ENCODE measurements at regions of chr6 and their contacts with region 1.

Region 1: GRCh38 chr6:137873273-137873762 is 6.3 kb downstream of the TNFAIP3 start:
- DNase-seq: peak; percentile 92
- H3K4me3 Mint-ChIP-seq: peak overlapping the region; percentile 91
- H3K27ac Mint-ChIP-seq: peak overlapping the region; percentile 93
- H3K4me1 Mint-ChIP-seq: peaks cover 46% of the 10 kb centered on the region
- H3K27me3 Mint-ChIP-seq: no peaks in the 10 kb centered on the region

Region 2: DNA sequence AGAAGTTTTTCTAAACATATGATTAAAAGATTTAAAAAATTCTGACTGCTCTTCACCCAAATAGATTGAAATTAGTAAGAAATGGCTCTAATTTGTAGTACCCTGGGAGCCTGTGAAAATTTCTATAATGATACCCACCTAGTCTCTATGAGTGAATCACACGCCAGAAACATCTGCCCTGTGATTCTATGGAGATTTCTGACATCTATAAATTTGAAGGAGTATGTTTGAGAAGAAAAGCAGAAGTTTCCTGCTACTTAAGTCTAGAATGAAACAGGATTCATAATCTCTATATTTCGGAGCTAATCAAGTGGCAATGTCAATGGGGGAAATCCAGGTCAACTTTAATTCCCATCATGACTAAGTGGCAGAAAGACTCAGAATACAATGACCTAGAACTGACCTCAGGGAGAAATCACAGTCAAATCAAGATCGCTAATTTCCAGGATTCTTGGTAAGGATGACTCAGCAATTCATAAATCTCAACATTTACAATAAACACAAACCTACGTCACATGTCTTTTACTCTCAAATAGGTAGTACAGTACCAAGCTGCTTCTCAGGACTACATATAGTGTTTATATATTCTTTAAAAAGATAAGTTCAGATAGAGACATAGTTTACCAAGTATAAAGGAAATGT is 192.5 kb before region 1 on chr6:
- CTCF ChIA-PET with region 1: interaction called, 3 read pairs
- POLR2A ChIA-PET with region 1: interaction called, 11 read pairs
- intact Hi-C with region 1: no loop called
- DNase-seq: no peak
- H3K4me3 Mint-ChIP-seq: peak overlapping the region; percentile 18
- H3K27ac Mint-ChIP-seq: peak overlapping the region; percentile 75
- H3K4me1 Mint-ChIP-seq: peaks cover 64% of the 10 kb centered on the region
- H3K27me3 Mint-ChIP-seq: no peaks in the 10 kb centered on the region

Region 3: GRCh38 chr6:137799950-137800568 is 73.3 kb before region 1 on chr6:
- CTCF ChIA-PET with region 1: interaction called, 170 read pairs
- POLR2A ChIA-PET with region 1: interaction called, 40 read pairs
- intact Hi-C with region 1: no loop called
- DNase-seq: peak; percentile 72
- H3K4me3 Mint-ChIP-seq: peak overlapping the region; percentile 4
- H3K27ac Mint-ChIP-seq: peak overlapping the region; percentile 69
- H3K4me1 Mint-ChIP-seq: peaks cover 57% of the 10 kb centered on the region
- H3K27me3 Mint-ChIP-seq: no peaks in the 10 kb centered on the region

Region 4: GRCh38 chr6:137823826-137824555 is 49.3 kb before region 1 on chr6:
- CTCF ChIA-PET with region 1: interaction called, 17 read pairs
- POLR2A ChIA-PET with region 1: interaction called, 30 read pairs
- intact Hi-C with region 1: loop called (anchors 1 kb)
- DNase-seq: peak; percentile 83
- H3K4me3 Mint-ChIP-seq: peak overlapping the region; percentile 70
- H3K27ac Mint-ChIP-seq: peak overlapping the region; percentile 96
- H3K4me1 Mint-ChIP-seq: peaks cover 83% of the 10 kb centered on the region
- H3K27me3 Mint-ChIP-seq: no peaks in the 10 kb centered on the region

Region 5: DNA sequence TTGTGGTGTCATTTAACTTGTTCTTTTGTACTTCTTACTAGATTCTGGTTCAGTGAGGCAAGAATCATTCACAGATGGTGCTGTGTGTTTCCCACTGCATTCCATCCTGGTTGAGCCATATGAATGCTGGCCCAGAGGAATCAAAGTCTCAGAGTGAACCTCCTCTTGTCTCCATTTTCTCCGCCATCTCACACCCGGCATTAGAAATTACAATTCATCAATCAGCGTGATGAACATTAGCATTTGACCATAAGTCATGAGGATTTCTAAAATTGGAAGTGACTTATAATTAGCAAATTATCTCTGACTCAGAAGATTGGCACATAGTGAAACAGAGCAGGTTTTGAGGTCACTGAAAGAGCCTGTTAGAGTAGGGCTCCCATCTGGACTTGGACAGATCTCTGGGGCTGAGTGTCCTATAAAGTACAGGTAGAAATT is 19.0 kb after region 1 on chr6:
- CTCF ChIA-PET with region 1: no interaction called
- POLR2A ChIA-PET with region 1: no interaction called
- intact Hi-C with region 1: no loop called
- DNase-seq: no peak
- H3K4me3 Mint-ChIP-seq: no peak overlapping the region
- H3K27ac Mint-ChIP-seq: no peak overlapping the region
- H3K4me1 Mint-ChIP-seq: peaks cover 12% of the 10 kb centered on the region
- H3K27me3 Mint-ChIP-seq: no peaks in the 10 kb centered on the region

Region 6: DNA sequence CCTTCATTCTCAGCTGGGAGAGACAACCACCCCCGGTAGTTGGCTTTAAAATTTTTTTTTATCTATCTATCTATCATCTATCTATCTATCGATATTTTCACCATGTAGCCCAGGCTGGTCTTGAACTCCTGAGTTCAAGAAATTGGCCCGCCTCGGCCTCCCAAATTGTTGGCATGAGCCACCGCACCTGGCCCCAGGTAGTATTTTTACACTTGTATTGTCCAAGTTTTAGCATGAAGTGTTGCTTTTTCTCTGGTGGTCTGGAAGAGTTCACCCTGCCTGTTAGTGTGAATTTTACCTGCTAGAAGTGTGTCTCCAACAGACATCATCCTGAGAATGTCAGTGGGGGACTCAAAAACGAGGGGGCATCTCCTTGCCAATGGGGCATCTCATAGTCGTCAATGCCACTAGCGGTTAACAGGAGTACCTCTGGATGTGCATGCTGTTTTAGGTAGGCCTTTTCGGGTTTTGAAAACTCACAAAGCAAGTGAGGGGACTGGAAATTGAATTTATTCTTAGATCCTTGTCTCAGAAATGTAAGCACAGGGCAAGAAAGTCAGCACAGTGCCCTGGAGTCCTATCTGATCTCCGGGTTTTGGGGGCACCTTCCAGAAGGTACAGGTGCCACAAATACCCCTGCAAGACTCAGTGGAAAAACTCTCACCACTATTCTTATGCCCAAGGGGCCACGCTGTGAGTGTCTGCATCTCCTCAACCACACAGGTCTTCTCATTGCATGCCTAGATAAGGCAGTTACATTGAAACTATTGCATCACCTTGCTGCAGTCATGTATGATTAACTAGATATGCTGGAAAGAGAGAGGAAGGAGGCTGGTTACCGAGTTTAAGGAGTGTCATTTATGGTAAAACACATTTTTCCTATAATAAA is 30.9 kb after region 1 on chr6:
- CTCF ChIA-PET with region 1: interaction called, 3 read pairs
- POLR2A ChIA-PET with region 1: interaction called, 4 read pairs
- intact Hi-C with region 1: loop called (anchors 1 kb)
- DNase-seq: peak; percentile 75
- H3K4me3 Mint-ChIP-seq: peak overlapping the region; percentile 71
- H3K27ac Mint-ChIP-seq: peak overlapping the region; percentile 100
- H3K4me1 Mint-ChIP-seq: peaks cover 55% of the 10 kb centered on the region
- H3K27me3 Mint-ChIP-seq: no peaks in the 10 kb centered on the region

Region 7: GRCh38 chr6:137937834-137938233 is 64.5 kb after region 1 on chr6:
- CTCF ChIA-PET with region 1: interaction called, 270 read pairs
- POLR2A ChIA-PET with region 1: interaction called, 33 read pairs
- intact Hi-C with region 1: loop called (anchors 1 kb)
- DNase-seq: no peak
- H3K4me3 Mint-ChIP-seq: no peak overlapping the region
- H3K27ac Mint-ChIP-seq: no peak overlapping the region
- H3K4me1 Mint-ChIP-seq: peaks cover 38% of the 10 kb centered on the region
- H3K27me3 Mint-ChIP-seq: no peaks in the 10 kb centered on the region

Region 8: GRCh38 chr6:137975188-137975940 is 102.0 kb after region 1 on chr6:
- CTCF ChIA-PET with region 1: interaction called, 72 read pairs
- POLR2A ChIA-PET with region 1: interaction called, 11 read pairs
- intact Hi-C with region 1: loop called (anchors 1 kb)
- DNase-seq: peak; percentile 38
- H3K4me3 Mint-ChIP-seq: peak overlapping the region; percentile 64
- H3K27ac Mint-ChIP-seq: peak overlapping the region; percentile 84
- H3K4me1 Mint-ChIP-seq: peaks cover 59% of the 10 kb centered on the region
- H3K27me3 Mint-ChIP-seq: no peaks in the 10 kb centered on the region

Measured in activated CD4-positive, alpha-beta memory T cell treated with anti-CD3 and anti-CD28 coated beads for 36 hours (primary cell).